CD8-positive, alpha-beta memory T cell (primary cell): ENCODE measurements at regions of chrX and their contacts with region 1.

Region 1: DNA sequence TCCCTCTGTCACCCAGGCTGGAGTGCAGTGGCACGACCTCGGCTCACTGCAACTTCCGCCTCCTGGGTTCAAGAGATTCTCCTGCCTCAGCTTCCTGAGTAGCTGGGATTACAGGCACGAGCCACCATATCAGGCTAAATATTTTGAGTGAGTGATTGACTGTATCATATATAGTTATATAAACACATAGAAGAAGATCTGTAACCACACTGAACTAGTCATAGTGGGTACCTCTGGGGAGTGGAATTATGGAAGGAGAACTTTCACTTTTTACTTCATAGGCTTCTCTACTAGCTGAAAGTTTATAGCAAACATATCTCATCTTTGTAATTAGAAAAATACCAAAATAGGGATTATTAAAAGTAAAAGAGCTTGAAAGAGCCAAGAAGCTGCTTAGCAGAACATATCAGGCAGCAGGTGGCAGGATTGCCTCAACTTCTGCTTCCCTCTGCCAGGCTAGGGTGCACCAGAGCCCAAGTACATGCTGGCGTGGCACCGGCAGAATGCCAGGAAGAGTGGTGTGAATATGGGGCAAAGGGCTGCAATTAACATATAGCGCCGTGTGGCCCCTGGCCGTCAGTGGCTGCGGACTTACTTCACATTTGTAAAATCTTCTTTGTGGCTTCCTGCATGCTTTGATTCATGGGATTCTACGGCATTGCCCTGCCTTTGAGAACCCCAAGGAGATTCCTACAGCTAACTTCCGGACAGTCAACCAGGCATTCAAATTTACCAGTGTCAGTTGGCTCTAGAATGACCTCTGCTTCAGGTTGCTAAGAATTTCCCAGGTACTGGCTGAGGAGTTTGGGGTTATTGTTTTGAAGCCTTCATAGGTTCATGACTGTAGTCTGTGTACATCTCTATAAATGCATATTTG is 39.4 kb upstream of the CD40LG start:
- DNase-seq: peak; percentile 12 to 67 (median 39)
- H3K4me3 ChIP-seq: peak overlapping the region; percentile 35
- H3K4me3 Mint-ChIP-seq: peak overlapping the region in 4 of 7 donors; percentile 0 to 51 (median 18)
- H3K27ac ChIP-seq: no peak overlapping the region
- H3K27ac Mint-ChIP-seq: peak overlapping the region in 4 of 8 donors; percentile 39 to 66 (median 46)
- H3K4me1 ChIP-seq: peaks cover 19% of the 10 kb centered on the region
- H3K4me1 Mint-ChIP-seq: peaks cover 22 to 38% (median 26%) of the 10 kb centered on the region in 3 donors
- H3K27me3 ChIP-seq: no peaks in the 10 kb centered on the region
- H3K27me3 Mint-ChIP-seq: peaks cover 0 to 6% of the 10 kb centered on the region in 2 donors

Region 2: DNA sequence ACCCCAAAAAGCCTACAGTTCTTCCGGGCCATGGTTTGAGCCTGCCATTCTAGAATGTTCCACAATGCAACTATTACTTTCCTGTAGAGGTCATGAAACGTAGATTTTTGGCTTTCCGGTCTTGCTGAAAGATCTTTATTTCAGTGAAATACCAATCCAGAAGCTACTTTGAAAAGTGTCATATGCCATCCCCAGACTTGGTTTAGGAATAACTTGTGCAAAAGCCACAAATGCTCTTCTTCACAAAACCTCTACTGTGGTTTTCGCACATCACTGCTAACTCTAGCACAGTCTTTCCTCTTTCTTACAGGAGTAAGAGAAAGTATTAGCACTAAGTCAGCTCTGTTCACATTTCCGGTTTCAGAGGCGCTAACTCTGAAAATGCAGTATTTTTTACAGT is 26.7 kb after region 1 on chrX:
- CTCF ChIA-PET with region 1: interaction called, 14 read pairs
- POLR2A ChIA-PET with region 1: no interaction called
- DNase-seq: peak in 3 of 5 donors; percentile 40 to 62 (median 46)
- H3K4me3 ChIP-seq: peak overlapping the region; percentile 45
- H3K4me3 Mint-ChIP-seq: peak overlapping the region; percentile 65 to 82 (median 75)
- H3K27ac ChIP-seq: no peak overlapping the region
- H3K27ac Mint-ChIP-seq: peak overlapping the region; percentile 68 to 94 (median 80)
- H3K4me1 ChIP-seq: peaks cover 90% of the 10 kb centered on the region
- H3K4me1 Mint-ChIP-seq: peaks cover 63 to 90% (median 89%) of the 10 kb centered on the region in 3 donors
- H3K27me3 ChIP-seq: no peaks in the 10 kb centered on the region
- H3K27me3 Mint-ChIP-seq: peaks cover 0 to 10% of the 10 kb centered on the region in 2 donors

Region 3: GRCh38 chrX:136689436-136689835 is 80.9 kb after region 1 on chrX:
- CTCF ChIA-PET with region 1: interaction called, 39 read pairs
- POLR2A ChIA-PET with region 1: interaction called, 5 read pairs
- DNase-seq: peak in 1 of 5 donors; percentile 31
- H3K4me3 ChIP-seq: no peak overlapping the region
- H3K4me3 Mint-ChIP-seq: peak overlapping the region in 6 of 7 donors; percentile 13 to 72 (median 44)
- H3K27ac ChIP-seq: no peak overlapping the region
- H3K27ac Mint-ChIP-seq: peak overlapping the region; percentile 81 to 95 (median 88)
- H3K4me1 ChIP-seq: peaks cover 79% of the 10 kb centered on the region
- H3K4me1 Mint-ChIP-seq: peaks cover 71 to 77% (median 74%) of the 10 kb centered on the region in 3 donors
- H3K27me3 ChIP-seq: no peaks in the 10 kb centered on the region
- H3K27me3 Mint-ChIP-seq: peaks cover 0 to 1% of the 10 kb centered on the region in 2 donors

Region 4: GRCh38 chrX:136694431-136695087 is 86.0 kb after region 1 on chrX:
- CTCF ChIA-PET with region 1: interaction called, 39 read pairs
- POLR2A ChIA-PET with region 1: interaction called, 5 read pairs
- DNase-seq: peak in 3 of 5 donors; percentile 44 to 60 (median 50)
- H3K4me3 ChIP-seq: peak overlapping the region; percentile 38
- H3K4me3 Mint-ChIP-seq: peak overlapping the region; percentile 10 to 77 (median 69)
- H3K27ac ChIP-seq: peak overlapping the region; percentile 38
- H3K27ac Mint-ChIP-seq: peak overlapping the region; percentile 89 to 98 (median 93)
- H3K4me1 ChIP-seq: peaks cover 71% of the 10 kb centered on the region
- H3K4me1 Mint-ChIP-seq: peaks cover 60 to 77% (median 71%) of the 10 kb centered on the region in 3 donors
- H3K27me3 ChIP-seq: no peaks in the 10 kb centered on the region
- H3K27me3 Mint-ChIP-seq: peaks cover 0 to 3% of the 10 kb centered on the region in 2 donors